Activated CD4-positive, alpha-beta T cell treated with anti-CD3 and anti-CD28 coated beads for 36 hours (primary cell): ENCODE measurements at regions of chr18 and their contacts with region 1.

Region 1: DNA sequence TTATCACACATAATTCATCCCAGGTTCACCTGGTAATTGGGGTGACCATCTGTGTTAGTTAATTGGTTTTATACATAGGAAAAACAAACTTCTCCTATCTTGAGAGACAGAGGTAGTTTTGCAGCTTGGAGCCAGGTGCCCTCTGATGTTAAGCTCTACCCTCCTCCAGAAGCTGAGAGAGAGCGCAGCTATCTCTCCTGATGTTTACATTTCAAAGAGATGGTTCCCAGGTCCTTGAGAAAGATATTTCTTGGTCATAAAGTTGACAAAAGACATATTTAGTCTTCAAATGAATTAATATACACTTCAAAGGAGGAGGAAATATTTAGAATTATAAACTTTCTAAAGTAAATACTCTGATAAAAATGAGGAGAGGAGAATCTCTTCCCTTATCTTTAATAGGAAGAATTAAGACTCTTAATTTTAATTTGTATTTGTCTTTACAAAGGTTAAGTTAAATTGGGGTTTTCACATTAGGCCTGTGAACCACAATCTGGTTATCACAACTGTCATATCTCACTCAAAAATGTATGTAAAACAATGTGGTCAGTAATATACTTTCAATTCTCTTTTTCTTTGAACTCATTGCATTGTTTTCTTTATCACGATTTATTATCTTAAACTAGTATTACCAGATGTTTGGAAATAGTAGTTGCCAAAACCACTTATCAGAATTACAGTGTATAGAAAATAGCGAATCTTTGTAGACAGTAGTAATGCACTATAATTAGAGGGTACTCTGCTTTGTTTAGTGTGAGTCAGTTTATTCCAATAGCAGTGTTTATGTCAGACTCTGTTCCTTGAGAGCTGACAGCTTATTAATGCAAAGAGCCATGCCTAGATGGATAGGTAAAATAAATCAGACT is 26.8 kb downstream of the SERPINB4 start:
- DNase-seq: no peak
- ATAC-seq: no peak
- H3K4me3 Mint-ChIP-seq: no peak overlapping the region
- H3K27ac Mint-ChIP-seq: no peak overlapping the region
- H3K4me1 Mint-ChIP-seq: no peaks in the 10 kb centered on the region
- H3K27me3 Mint-ChIP-seq: peaks cover 5% of the 10 kb centered on the region

Region 2: DNA sequence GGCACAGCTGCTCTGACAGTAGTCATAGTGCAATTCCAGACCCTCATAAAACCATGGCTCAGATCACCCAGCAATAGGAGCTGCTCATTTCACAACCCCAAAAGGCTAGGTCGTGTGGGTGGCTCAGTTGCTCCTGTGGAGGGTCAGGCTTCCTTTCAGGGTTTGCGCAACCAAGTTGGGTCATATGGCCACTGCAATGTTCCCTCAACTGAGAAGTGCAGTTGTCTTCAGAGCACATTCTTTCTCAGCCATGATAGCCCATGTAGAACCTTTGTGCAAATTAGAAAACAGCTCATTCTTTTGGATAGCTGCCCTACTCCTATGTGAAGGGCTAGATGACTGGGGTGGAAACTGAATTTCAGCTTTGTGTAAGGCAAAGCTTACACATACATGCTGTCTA is 26.9 kb before region 1 on chr18:
- CTCF ChIA-PET with region 1: no interaction called
- POLR2A ChIA-PET with region 1: no interaction called
- intact Hi-C with region 1: loop called in 1 of 2 experiments (anchors 1 kb)
- DNase-seq: no peak
- ATAC-seq: no peak
- H3K4me3 Mint-ChIP-seq: no peak overlapping the region
- H3K27ac Mint-ChIP-seq: no peak overlapping the region
- H3K4me1 Mint-ChIP-seq: no peaks in the 10 kb centered on the region
- H3K27me3 Mint-ChIP-seq: peaks cover 3% of the 10 kb centered on the region